ENCODE measurements at regions of chr5 and their contacts with region 1.

Region 1: GRCh38 chr5:138503487-138504270 is 38.4 kb downstream of the EGR1 start:
- DNase-seq: peak; percentile 38
- H3K4me3 Mint-ChIP-seq: no peak overlapping the region
- H3K27ac Mint-ChIP-seq: no peak overlapping the region
- H3K4me1 Mint-ChIP-seq: no peaks in the 10 kb centered on the region
- H3K27me3 Mint-ChIP-seq: no peaks in the 10 kb centered on the region

Region 2: GRCh38 chr5:138455232-138455930 is 48.3 kb before region 1 on chr5:
- CTCF ChIA-PET with region 1: interaction called, 13 read pairs
- POLR2A ChIA-PET with region 1: no interaction called
- DNase-seq: no peak
- H3K4me3 Mint-ChIP-seq: no peak overlapping the region
- H3K27ac Mint-ChIP-seq: no peak overlapping the region
- H3K4me1 Mint-ChIP-seq: peaks cover 23% of the 10 kb centered on the region
- H3K27me3 Mint-ChIP-seq: no peaks in the 10 kb centered on the region

Region 3: GRCh38 chr5:138491669-138492559 is 11.8 kb before region 1 on chr5:
- CTCF ChIA-PET with region 1: interaction called, 10 read pairs
- POLR2A ChIA-PET with region 1: no interaction called
- DNase-seq: peak; percentile 89
- H3K4me3 Mint-ChIP-seq: peak overlapping the region; percentile 84
- H3K27ac Mint-ChIP-seq: peak overlapping the region; percentile 46
- H3K4me1 Mint-ChIP-seq: peaks cover 12% of the 10 kb centered on the region
- H3K27me3 Mint-ChIP-seq: peaks cover 34% of the 10 kb centered on the region

Measured in activated CD4-positive, alpha-beta T cell treated with anti-CD3 and anti-CD28 coated beads, Interleukin-2, amount 10 ng/mL, durations not matched to agents 7 days and 5 days (primary cell).